T47D (cell line): ENCODE measurements at regions of chr4 and their contacts with region 1.

Region 1: GRCh38 chr4:87679449-87680169 is 29.5 kb downstream of the DMP1 start:
- DNase-seq: peak in 1 of 2 experiments; percentile 49

Region 2: DNA sequence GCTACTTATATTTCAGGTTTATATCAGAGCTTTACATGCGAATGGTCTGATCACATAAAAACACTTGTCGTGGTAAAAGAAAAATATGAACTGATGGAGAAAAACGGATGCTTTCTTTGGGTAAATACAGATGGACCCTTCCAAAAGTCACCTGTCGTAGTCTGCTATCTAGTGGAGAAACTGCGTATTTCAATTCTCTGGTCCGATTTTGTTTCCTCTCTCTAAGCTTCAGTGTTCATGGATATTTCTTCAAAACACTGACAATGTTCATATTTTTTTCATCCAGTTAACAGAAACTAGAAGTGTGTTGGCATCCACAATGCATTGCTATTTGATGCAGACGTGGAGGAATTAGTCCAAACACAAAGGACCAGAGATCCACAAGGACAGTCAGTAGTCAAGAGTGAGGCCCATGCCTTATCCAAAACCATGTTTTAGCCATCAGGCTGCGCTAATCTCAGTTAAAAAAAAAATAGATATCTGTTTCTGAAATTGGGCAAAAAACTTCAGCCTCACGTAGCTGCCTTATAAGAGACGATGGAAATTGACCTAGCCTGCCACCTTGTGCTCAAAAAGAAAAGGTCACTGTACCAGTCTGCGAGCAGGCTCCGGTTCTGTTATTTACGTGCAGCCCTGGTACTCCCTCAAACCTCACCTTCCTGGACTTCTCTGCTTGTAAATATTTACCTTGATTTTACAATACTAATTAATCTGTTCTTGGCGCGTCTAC is 169.2 kb after region 1 on chr4:
- in situ Hi-C with region 1: loop called (anchors 25 kb)
- DNase-seq: peak; percentile 22 to 61